AG04449 (cell line): ENCODE measurements at regions of chr17 and their contacts with region 1.

Region 1: GRCh38 chr17:1648963-1649843 is 463 bp downstream of the RILP start:
- DNase-seq: peak; percentile 67
- H3K4me3 ChIP-seq: peak overlapping the region; percentile 66
- CTCF ChIP-seq: peak; percentile 97

Region 2: DNA sequence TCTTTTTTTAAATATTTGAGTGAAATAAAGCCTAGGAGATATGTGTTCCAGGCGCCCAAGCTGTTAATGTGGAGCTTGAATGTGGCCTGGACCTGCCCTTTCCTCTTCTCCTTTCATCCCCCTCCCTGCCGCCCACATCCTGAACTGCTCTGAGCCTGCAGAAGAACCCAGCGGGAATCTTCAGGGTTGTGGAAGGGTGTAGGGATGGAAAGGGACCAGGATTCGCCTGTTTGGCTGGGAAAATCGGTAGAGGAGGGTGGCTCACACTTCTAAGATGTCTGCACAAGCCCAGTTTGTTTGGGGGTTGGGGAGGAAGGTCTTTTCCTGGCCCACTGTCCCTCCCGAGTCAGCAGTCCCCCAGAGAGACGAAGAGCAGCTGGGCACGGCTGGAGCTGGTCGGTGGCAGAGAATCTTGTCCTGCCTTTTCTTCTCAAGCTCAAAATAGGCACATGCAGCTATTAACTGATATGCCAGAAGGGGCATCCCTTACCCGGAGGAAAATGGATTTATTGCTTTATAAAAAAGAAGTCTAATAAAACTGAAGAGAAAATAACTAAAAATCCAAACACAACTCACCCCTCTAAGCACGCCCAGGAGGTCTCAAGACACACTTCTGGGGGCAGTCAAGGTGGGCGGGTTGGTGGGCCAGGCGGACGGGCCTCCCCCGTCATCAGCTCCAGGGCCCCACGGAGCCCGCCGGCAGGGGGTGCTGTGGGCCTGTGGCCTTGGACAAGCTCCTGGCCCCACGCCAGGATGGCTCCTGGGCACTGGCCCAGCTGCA is 75.1 kb before region 1 on chr17:
- CTCF ChIA-PET with region 1: interaction called, 80 read pairs
- POLR2A ChIA-PET with region 1: no interaction called
- DNase-seq: no peak
- H3K4me3 ChIP-seq: no peak overlapping the region
- CTCF ChIP-seq: peak; percentile 91

Region 3: DNA sequence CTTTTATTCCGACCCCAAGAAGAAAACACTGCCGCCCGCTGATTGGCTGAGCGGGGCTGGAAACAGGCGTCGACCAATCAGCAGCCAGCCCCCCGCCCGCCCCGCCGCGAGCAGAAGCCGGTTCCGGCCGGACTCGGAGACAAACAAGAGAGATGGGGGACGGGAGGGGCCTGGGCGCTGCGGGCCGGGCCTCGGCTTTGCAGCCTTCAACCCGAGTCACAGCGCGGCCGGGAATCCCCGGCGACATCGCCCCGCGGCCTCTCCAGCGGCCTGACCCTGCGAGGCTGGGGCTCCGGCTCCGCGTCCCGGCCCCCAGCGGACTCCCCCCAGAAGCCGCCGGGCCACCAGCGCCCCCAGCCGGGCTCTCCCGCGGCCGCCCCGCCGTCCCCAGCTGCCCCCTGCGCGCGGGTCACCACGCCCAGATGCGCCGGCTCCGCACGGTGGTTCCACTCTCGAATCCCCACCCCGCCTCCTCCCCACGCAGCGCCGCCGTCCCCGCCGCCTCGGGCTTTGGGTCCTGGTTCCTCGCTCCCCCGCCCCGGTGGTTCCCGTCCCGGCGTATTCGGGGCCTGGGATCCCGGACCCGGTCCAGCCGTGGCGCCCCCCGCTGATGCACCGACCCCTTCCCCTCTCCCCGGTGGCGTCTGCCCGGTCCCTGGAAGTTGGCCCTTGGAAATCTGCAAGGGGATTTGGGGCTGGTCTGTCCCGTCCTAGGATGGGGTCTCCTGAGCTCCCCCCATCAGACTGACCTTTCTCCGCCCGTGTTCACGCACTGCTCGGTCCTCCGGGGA is 20.2 kb before region 1 on chr17:
- CTCF ChIA-PET with region 1: interaction called, 26 read pairs
- POLR2A ChIA-PET with region 1: no interaction called
- DNase-seq: peak; percentile 36
- H3K4me3 ChIP-seq: peak overlapping the region; percentile 71
- CTCF ChIP-seq: peak; percentile 18

Region 4: GRCh38 chr17:1684378-1685189 is 35.4 kb after region 1 on chr17 and contains the start of gene PRPF8:
- CTCF ChIA-PET with region 1: interaction called, 10 read pairs
- POLR2A ChIA-PET with region 1: interaction called, 6 read pairs
- DNase-seq: peak; percentile 73
- H3K4me3 ChIP-seq: peak within 1 kb of the TSS; percentile 86
- CTCF ChIP-seq: no peak